ENCODE measurements at regions of chr5 and their contacts with region 1.

Region 1: DNA sequence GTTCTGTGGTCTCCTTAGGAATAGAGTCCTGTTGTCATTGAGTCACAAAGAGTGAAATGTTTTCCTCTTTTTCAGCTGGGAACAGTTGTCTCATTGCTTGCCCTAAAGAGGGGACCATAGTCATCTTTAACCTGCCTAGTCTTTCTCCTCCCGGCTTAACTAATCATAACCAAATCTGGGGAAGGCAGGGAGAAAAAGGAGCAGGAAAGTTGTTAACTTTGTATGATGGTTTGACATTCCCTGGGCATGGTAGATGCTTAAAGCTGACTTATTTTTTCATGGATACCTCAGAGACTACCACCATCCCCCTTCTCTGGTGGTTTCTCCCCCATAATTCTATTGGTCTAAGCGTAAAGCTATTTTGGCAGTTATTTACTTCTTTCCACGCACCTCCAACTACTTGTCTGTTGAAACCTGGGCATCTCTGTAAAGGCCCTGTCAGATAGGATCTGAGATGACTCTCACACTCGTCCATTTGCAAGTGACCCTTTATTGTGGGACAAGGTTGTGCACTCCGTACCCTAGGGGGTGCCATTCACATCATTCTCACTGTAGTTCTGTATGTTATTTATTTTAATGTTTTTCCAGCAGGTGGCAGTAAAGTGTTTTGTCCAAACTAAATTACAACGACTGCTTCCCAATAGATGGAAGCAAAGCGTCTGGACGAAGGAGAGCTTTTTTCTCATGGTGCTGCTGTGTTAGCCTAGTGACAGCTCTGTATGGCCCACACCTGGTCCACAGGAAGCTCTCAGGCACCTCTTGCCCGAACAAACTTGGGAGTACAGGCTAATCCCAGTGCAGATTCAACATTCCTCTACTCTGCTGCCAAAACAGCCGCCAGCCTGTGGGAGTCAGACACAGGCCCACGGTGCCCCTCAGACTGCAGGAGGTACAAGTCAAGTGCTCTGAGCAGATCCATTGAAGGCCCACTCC is 3.0 kb upstream of the FAM13B start:
- DNase-seq: peak; percentile 74
- ATAC-seq: peak; percentile 74
- H3K4me3 Mint-ChIP-seq: no peak overlapping the region
- H3K27ac Mint-ChIP-seq: no peak overlapping the region
- H3K4me1 Mint-ChIP-seq: peaks cover 26% of the 10 kb centered on the region
- H3K27me3 Mint-ChIP-seq: no peaks in the 10 kb centered on the region

Region 2: DNA sequence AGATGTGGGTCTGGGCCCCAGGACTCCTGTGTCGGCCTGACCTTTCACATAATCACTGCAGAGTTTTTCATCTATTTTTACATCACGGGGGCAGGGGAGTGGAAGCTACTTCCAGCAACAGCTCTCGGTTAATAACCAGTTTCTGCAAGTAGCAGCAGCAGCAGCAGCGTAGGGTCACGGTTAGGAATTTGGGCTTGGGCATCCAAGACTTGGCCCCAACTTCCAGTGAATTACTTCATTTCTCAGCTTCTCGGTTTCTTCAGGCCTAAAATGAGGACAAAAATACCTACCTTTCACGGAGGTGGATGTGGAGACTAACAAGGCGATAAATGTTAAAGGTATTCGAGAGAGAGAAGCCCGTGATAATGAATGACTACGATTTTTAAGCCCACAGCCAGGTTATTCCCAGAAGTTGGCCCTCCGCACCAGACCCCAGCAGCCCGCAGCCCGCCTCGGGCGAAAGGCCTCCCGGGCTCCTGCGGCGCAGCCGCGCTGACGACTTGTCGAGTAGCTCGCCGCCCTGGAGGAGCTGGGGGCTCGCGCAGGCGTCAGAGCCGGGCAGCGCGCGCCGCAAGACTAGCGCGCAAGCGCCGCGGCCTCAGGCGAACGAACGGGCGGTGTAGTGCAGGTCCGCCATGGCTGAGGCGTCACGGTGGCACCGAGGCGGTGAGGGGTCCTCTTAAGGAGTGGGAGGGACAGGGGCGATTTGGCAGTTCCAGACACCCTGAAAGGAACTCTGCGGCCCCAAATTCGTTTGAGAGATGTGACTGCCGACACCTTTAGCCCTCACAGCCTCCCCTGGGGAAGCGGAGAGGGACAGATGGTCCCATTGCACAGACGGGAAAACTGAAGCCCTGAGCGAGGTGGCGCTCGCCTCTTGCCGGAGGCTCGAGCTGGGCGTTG is 146.8 kb before region 1 on chr5 and contains the start of gene PKD2L2:
- CTCF ChIA-PET with region 1: interaction called, 5 read pairs
- POLR2A ChIA-PET with region 1: no interaction called
- intact Hi-C with region 1: loop called in 1 of 2 experiments (anchors 1 kb)
- DNase-seq: peak; percentile 93
- ATAC-seq: peak; percentile 99
- H3K4me3 Mint-ChIP-seq: peak within 1 kb of the TSS; percentile 92
- H3K27ac Mint-ChIP-seq: peak within 1 kb of the TSS; percentile 93
- H3K4me1 Mint-ChIP-seq: peaks cover 21% of the 10 kb centered on the region
- H3K27me3 Mint-ChIP-seq: no peaks in the 10 kb centered on the region
- total RNA-seq, gene PKD2L2: 0.30 TPM in 1 of 2 experiments, not detected in the other

Region 3: DNA sequence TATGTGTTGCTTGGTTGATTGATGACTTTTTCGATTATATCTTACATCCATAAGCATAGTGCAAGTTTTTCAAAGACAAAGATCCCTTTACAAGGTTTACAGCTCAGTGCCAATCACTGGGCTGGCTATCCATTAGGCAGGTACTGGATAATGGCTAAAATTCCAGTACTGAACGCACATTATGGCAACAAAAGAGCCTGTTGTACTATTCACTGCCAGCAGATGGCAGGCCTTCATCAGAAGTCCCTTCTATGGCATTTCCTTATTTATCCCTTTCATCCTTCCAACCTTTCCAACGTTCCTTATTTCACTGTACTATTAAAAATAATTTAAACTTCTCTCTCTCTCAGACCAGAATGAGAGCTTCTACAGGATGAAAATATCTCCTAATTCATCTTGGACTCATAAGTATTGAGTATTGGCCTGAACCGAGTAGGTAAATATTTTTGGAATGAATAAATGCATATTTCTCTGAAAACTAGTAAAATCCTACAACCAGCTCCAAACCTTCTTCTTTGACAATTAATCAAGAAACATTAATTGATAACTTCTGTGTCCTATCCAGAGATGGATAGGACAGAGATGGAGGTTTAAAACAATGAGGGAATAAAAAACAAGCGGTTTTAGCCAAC is 41.3 kb after region 1 on chr5:
- CTCF ChIA-PET with region 1: interaction called, 28 read pairs
- POLR2A ChIA-PET with region 1: no interaction called
- intact Hi-C with region 1: no loop called
- DNase-seq: peak; percentile 70
- ATAC-seq: no peak
- H3K4me3 Mint-ChIP-seq: no peak overlapping the region
- H3K27ac Mint-ChIP-seq: no peak overlapping the region
- H3K4me1 Mint-ChIP-seq: peaks cover 15% of the 10 kb centered on the region
- H3K27me3 Mint-ChIP-seq: no peaks in the 10 kb centered on the region

Region 4: GRCh38 chr5:138213161-138214029 is 177.5 kb after region 1 on chr5 and contains the start of gene CDC23:
- CTCF ChIA-PET with region 1: no interaction called
- POLR2A ChIA-PET with region 1: no interaction called
- intact Hi-C with region 1: loop called in 1 of 2 experiments (anchors 1 kb)
- DNase-seq: peak; percentile 94
- ATAC-seq: peak; percentile 98
- H3K4me3 Mint-ChIP-seq: peak within 1 kb of the TSS; percentile 92
- H3K27ac Mint-ChIP-seq: peak within 1 kb of the TSS; percentile 94
- H3K4me1 Mint-ChIP-seq: peaks cover 16% of the 10 kb centered on the region
- H3K27me3 Mint-ChIP-seq: no peaks in the 10 kb centered on the region
- total RNA-seq, gene CDC23: 34.0 to 38.1 TPM

Region 5: DNA sequence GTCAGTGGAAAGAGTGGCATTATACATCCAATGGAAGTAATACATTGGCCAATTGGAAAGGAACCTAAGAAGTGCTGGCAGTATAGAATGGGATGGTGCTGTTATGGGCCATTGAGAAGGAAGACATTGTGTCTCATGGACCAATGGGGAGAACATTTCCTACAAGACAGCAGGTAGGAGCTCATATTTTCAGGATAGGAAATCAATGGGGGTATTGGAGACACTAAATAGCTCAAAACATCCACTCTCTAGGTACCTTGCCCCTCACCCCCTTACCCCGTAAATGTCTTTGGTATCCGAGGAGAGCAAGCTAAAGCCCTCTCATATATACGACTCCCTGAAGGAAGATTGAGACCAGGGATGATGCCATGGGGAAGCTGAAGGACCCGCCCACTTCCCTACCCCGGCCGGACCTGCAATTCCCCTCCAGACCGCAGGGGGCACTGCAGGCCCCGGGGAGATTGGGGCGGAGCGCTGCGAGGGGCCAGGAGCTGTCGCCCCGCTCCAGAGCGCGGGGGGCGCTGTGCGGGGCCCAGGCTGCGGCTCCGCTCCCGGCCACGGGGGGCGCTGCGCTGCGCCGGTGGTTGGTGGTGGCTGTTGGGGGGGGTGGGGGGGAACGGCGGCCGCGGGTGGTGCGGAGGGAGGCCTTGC is 316.3 kb after region 1 on chr5 and contains the start of gene KDM3B:
- CTCF ChIA-PET with region 1: no interaction called
- POLR2A ChIA-PET with region 1: interaction called, 3 read pairs
- intact Hi-C with region 1: loop called in 1 of 2 experiments (anchors 2 kb)
- DNase-seq: peak; percentile 94
- ATAC-seq: peak; percentile 76
- H3K4me3 Mint-ChIP-seq: peak within 1 kb of the TSS; percentile 99
- H3K27ac Mint-ChIP-seq: peak within 1 kb of the TSS; percentile 96
- H3K4me1 Mint-ChIP-seq: peaks cover 44% of the 10 kb centered on the region
- H3K27me3 Mint-ChIP-seq: no peaks in the 10 kb centered on the region
- total RNA-seq, gene KDM3B: 39.0 to 40.9 TPM

Measured in activated CD4-positive, alpha-beta T cell treated with anti-CD3 and anti-CD28 coated beads for 36 hours (primary cell).